Dendritic cell treated with granulocyte-macrophage colony-stimulating factor and Interleukin-4, amounts not matched to agents 40 ng/mL and 50 ng/mL, for 4 days (primary cell): ENCODE measurements at regions of chr17 and their contacts with region 1.

Region 1: GRCh38 chr17:29589524-29590410 is at the start of gene GIT1:
- H3K4me3 Mint-ChIP-seq: peak within 1 kb of the TSS; percentile 86
- H3K27ac Mint-ChIP-seq: peak within 1 kb of the TSS; percentile 80
- H3K4me1 Mint-ChIP-seq: peaks cover 80% of the 10 kb centered on the region
- H3K27me3 Mint-ChIP-seq: peaks cover 28% of the 10 kb centered on the region

Region 2: GRCh38 chr17:29617125-29617480 is 27.3 kb after region 1 on chr17:
- intact Hi-C with region 1: loop called (anchors 2 kb)
- H3K4me3 Mint-ChIP-seq: peak overlapping the region; percentile 59
- H3K27ac Mint-ChIP-seq: peak overlapping the region; percentile 78
- H3K4me1 Mint-ChIP-seq: peaks cover 55% of the 10 kb centered on the region
- H3K27me3 Mint-ChIP-seq: peaks cover 86% of the 10 kb centered on the region